Activated CD4-positive, alpha-beta T cell treated with anti-CD3 and anti-CD28 coated beads for 36 hours (primary cell): ENCODE measurements at regions of chr12 and their contacts with region 1.

Region 1: GRCh38 chr12:122895705-122896636 is at the start of gene VPS37B:
- DNase-seq: peak; percentile 93
- ATAC-seq: peak; percentile 67
- H3K4me3 Mint-ChIP-seq: peak within 1 kb of the TSS; percentile 86
- H3K27ac Mint-ChIP-seq: peak within 1 kb of the TSS; percentile 87
- H3K4me1 Mint-ChIP-seq: peaks cover 87% of the 10 kb centered on the region
- H3K27me3 Mint-ChIP-seq: peaks cover 7% of the 10 kb centered on the region
- total RNA-seq, gene VPS37B: 9.4 to 11.4 TPM

Region 2: GRCh38 chr12:122834104-122834920 is 61.7 kb before region 1 on chr12:
- CTCF ChIA-PET with region 1: no interaction called
- POLR2A ChIA-PET with region 1: no interaction called
- intact Hi-C with region 1: loop called in 1 of 2 experiments (anchors 2 kb)
- DNase-seq: peak; percentile 48
- ATAC-seq: peak; percentile 8
- H3K4me3 Mint-ChIP-seq: peak overlapping the region; percentile 75
- H3K27ac Mint-ChIP-seq: peak overlapping the region; percentile 74
- H3K4me1 Mint-ChIP-seq: peaks cover 31% of the 10 kb centered on the region
- H3K27me3 Mint-ChIP-seq: peaks cover 3% of the 10 kb centered on the region

Region 3: GRCh38 chr12:122880668-122881067 is 15.3 kb before region 1 on chr12:
- CTCF ChIA-PET with region 1: interaction called, 14 read pairs
- POLR2A ChIA-PET with region 1: no interaction called
- intact Hi-C with region 1: loop called in 1 of 2 experiments (anchors 2 kb)
- DNase-seq: peak; percentile 66
- ATAC-seq: peak; percentile 71
- H3K4me3 Mint-ChIP-seq: no peak overlapping the region
- H3K27ac Mint-ChIP-seq: no peak overlapping the region
- H3K4me1 Mint-ChIP-seq: peaks cover 70% of the 10 kb centered on the region
- H3K27me3 Mint-ChIP-seq: peaks cover 24% of the 10 kb centered on the region

Region 4: DNA sequence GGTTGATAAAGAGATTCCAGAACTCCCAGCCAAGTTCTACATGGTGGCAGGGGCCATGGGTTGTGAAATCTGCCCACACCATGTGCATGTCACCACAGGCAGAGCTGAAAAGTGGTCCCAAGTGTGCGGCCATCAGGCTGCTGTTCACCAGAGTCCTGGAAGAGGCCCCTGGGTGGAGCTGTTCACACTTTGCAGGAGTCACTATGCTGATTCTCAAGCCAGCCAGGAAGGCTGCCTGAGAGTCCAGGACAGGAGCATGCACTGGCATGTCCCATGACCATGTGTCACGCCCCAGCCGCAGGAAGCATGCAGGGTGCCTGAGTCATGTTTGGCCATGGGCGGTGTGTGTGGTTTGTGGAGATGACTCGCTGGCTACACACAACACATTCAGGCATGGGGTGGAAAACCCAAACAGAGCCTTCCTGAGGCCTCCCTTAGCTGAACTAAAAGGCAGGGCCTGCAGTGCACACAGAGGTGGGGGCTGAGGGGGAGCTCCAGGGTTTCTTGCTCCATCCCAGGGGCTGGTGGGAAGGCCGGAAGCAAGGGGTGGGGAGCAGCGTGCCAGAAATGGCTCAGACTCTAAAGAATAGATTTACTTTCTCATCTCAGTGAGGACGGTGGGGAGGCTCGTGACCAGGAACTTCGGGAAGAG is 50.8 kb after region 1 on chr12:
- CTCF ChIA-PET with region 1: no interaction called
- POLR2A ChIA-PET with region 1: no interaction called
- intact Hi-C with region 1: loop called in 1 of 2 experiments (anchors 1 kb)
- DNase-seq: peak; percentile 94
- ATAC-seq: peak; percentile 98
- H3K4me3 Mint-ChIP-seq: no peak overlapping the region
- H3K27ac Mint-ChIP-seq: peak overlapping the region; percentile 40
- H3K4me1 Mint-ChIP-seq: peaks cover 20% of the 10 kb centered on the region
- H3K27me3 Mint-ChIP-seq: no peaks in the 10 kb centered on the region

Region 5: DNA sequence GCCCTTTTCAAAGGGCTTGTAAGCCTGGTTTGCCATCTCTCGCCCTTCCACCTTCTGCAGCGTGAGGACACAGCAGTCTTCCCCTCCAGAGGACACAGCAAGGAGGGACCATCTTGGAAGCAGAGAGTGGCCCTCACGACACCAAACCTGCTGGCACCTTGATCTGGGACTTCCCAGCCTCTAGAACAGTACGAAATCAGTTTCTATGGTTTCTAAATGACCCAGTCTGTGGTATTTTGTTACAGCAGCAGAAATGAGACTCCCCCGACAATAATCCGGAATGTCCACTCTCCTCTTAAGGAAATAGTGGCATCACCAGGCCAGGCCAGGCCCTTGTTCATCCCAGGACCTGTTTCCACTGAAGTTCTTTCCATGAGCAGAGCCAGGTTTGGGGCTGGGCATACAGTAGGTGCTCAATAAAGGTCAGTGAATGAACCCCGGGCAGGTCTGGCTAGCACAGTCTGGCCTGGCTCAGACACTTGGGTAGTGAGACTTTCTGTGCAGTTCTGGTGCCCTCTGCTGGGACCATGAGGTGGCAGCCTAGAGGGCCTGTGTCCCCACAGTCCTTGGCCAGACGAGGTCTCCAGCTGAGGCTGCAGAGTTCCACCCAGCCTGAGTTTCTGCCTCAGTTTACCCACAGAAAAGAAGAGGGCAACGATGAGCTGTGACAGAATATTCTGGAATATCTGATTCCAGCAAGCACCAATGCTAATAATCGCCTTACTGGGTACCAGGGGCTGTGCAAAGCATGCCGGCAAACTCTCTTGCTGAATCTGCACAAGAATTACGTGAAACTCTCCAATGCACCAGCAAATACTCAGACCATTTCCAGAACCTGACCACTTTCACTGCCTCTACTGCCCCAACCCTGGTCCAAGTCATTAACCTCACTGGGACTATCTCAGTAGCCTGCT is 56.3 kb after region 1 on chr12:
- CTCF ChIA-PET with region 1: interaction called, 4 read pairs
- POLR2A ChIA-PET with region 1: no interaction called
- intact Hi-C with region 1: loop called in 1 of 2 experiments (anchors 1 kb)
- DNase-seq: peak; percentile 85
- ATAC-seq: peak; percentile 97
- H3K4me3 Mint-ChIP-seq: no peak overlapping the region
- H3K27ac Mint-ChIP-seq: no peak overlapping the region
- H3K4me1 Mint-ChIP-seq: peaks cover 4% of the 10 kb centered on the region
- H3K27me3 Mint-ChIP-seq: no peaks in the 10 kb centered on the region